PC-9 (cell line): ENCODE measurements at regions of chr4 and their contacts with region 1.

Region 1: GRCh38 chr4:127975121-127975770 is 10.0 kb downstream of the ABHD18 start:
- DNase-seq: no peak
- H3K4me3 ChIP-seq: no peak overlapping the region
- H3K27ac ChIP-seq: no peak overlapping the region
- H3K4me1 ChIP-seq: no peaks in the 10 kb centered on the region
- H3K27me3 ChIP-seq: no peaks in the 10 kb centered on the region
- CTCF ChIP-seq: no peak

Region 2: DNA sequence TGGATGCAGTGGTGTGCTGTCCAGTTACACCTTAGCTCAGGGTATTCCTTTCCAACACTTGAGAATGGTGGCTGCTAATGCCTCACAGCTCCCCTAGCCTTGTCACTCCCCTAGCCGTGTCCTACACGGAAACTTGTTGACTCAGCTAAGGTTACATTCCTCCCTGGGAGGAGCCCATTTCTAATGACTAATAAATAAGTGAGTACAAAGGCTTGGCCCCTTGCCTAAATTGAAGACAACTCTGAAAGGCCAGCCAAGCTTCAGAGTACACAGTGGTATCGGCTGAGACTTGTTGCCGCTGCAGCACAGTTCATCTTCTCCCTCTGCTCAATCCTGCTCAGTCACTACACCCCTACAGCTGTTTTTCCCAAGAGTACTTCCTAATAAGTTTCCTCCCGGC is 266.3 kb before region 1 on chr4:
- CTCF ChIA-PET with region 1: interaction called, 10 read pairs
- POLR2A ChIA-PET with region 1: interaction called, 4 read pairs
- intact Hi-C with region 1: no loop called
- DNase-seq: peak; percentile 74 to 100
- H3K4me3 ChIP-seq: peak overlapping the region; percentile 31; the same call in 1 of the 2 replicates
- H3K27ac ChIP-seq: peak overlapping the region; percentile 88
- H3K4me1 ChIP-seq: peaks cover 26% of the 10 kb centered on the region
- H3K27me3 ChIP-seq: no peaks in the 10 kb centered on the region
- CTCF ChIP-seq: no peak

Region 3: DNA sequence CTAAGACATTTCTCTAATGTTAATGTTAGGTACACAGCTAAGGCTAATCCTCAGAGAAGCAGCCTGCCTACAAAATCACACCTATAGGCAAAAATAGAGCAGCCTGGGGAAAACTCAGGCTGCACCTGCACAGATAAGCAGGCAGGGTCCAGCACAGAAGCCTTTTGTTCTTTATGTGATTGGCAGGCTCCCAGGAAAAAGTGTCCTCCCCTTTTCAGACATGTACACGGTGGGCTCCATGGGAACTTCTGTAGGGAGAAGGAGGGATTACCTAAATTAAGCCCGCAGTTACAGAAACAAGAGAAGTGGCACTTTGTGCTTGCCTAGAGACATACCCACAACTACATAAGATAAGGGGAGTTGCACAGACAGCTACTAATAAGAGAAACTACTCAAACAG is 197.1 kb before region 1 on chr4:
- CTCF ChIA-PET with region 1: no interaction called
- POLR2A ChIA-PET with region 1: no interaction called
- intact Hi-C with region 1: no loop called
- DNase-seq: no peak
- H3K4me3 ChIP-seq: no peak overlapping the region
- H3K27ac ChIP-seq: no peak overlapping the region
- H3K4me1 ChIP-seq: peaks cover 19% of the 10 kb centered on the region
- H3K27me3 ChIP-seq: no peaks in the 10 kb centered on the region
- CTCF ChIP-seq: no peak

Region 4: GRCh38 chr4:127922226-127922625 is 53.0 kb before region 1 on chr4:
- CTCF ChIA-PET with region 1: no interaction called
- POLR2A ChIA-PET with region 1: interaction called, 10 read pairs
- intact Hi-C with region 1: no loop called
- DNase-seq: no peak
- H3K4me3 ChIP-seq: no peak overlapping the region
- H3K27ac ChIP-seq: no peak overlapping the region
- H3K4me1 ChIP-seq: no peaks in the 10 kb centered on the region
- H3K27me3 ChIP-seq: no peaks in the 10 kb centered on the region
- CTCF ChIP-seq: no peak

Region 5: GRCh38 chr4:127997534-127998388 is 22.5 kb after region 1 on chr4:
- CTCF ChIA-PET with region 1: no interaction called
- POLR2A ChIA-PET with region 1: interaction called, 13 read pairs
- intact Hi-C with region 1: no loop called
- DNase-seq: no peak
- H3K4me3 ChIP-seq: no peak overlapping the region
- H3K27ac ChIP-seq: no peak overlapping the region
- H3K4me1 ChIP-seq: no peaks in the 10 kb centered on the region
- H3K27me3 ChIP-seq: no peaks in the 10 kb centered on the region
- CTCF ChIP-seq: no peak

Region 6: DNA sequence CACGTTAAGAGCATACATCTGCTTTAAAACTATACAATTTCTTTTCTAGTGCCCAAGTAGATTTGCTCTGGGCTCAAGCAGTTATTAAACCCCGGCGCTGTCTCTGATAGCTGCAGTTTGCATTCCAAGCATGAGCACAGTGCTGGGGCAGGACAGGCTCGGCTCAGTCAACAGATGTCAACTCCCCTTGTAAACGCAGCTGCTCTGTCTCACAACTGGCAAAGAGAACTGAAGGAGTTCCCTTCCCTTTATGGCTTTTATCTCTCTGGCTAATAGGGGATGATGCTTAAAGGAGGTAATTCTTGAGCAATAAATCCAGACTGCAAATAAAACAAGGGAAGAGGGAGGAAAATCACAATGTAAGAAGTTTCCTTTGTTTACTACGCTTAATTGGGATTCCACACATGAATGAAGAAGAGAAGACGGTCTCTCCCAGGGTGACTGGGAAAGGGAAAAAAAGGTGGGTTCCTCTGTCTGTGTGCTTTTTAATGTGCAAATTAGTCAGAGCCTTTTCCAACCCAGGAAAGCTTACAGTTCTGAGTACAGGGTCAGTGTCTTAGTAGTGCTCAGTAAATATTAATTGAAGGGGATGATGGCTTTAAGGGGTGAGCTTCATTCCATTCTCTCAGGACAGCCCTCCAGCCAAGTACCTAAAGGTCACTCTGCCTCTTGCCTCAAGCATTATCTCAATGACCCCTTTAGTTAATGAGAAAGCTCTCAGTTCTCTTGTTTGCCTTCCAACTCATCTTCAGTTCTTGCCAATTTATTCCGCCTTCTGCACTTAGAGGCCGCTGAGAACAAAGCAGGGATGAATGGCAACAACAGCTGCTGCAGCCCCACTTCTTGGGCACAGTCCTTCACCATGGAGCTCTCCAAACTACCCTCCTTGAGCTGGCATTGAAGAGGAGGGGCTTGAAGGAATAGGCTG is 678.5 kb after region 1 on chr4:
- CTCF ChIA-PET with region 1: no interaction called
- POLR2A ChIA-PET with region 1: interaction called, 10 read pairs
- intact Hi-C with region 1: no loop called
- DNase-seq: no peak
- H3K4me3 ChIP-seq: no peak overlapping the region
- H3K27ac ChIP-seq: no peak overlapping the region
- H3K4me1 ChIP-seq: no peaks in the 10 kb centered on the region
- H3K27me3 ChIP-seq: no peaks in the 10 kb centered on the region
- CTCF ChIP-seq: no peak